MCF 10A (cell line): ENCODE measurements at regions of chr1 and their contacts with region 1.

Region 1: GRCh38 chr1:32400876-32401631 is 6.8 kb upstream of the BSDC1 start:
- DNase-seq: peak; percentile 90
- H3K4me3 Mint-ChIP-seq: no peak overlapping the region
- H3K27ac Mint-ChIP-seq: peak overlapping the region; percentile 67
- H3K4me1 Mint-ChIP-seq: peaks cover 6% of the 10 kb centered on the region
- H3K27me3 Mint-ChIP-seq: no peaks in the 10 kb centered on the region
- CTCF ChIP-seq: peak; percentile 86

Region 2: DNA sequence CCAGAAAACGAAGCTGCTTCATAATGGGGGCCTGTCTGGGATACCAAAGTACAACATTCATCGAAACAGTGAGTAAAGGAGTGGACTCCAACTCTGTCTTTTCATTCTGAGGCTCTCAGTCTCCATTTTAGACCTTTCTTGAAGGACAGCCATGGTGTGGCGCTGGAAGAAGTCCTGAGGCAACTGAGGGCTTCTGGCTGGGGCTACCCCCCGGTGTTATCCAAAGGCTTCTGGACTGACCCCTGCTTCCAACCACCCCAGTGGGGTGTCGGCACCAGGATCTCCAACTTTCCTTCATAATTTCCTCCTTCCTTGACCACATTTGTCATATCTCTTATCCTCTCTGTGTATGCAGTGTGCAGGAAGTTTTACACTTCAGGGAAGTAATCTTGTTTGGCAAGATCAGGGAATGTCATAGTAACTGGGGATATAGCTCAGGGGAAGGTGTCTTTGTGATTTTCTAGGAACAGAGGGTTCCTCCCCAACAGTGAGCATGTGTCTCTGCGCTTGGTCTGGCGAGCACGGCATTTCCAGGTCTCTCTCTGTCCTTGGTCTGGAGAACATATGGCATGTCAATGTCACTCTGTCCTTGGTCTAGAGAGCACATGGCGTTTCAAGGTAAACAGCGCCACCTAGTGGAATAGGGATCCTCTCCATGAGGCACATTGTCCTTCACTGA is 12.6 kb after region 1 on chr1:
- CTCF ChIA-PET with region 1: interaction called, 20 read pairs
- POLR2A ChIA-PET with region 1: no interaction called
- intact Hi-C with region 1: loop called (anchors 2 kb)
- DNase-seq: peak; percentile 84
- H3K4me3 Mint-ChIP-seq: no peak overlapping the region
- H3K27ac Mint-ChIP-seq: no peak overlapping the region
- H3K4me1 Mint-ChIP-seq: no peaks in the 10 kb centered on the region
- H3K27me3 Mint-ChIP-seq: no peaks in the 10 kb centered on the region
- CTCF ChIP-seq: peak; percentile 60

Region 3: DNA sequence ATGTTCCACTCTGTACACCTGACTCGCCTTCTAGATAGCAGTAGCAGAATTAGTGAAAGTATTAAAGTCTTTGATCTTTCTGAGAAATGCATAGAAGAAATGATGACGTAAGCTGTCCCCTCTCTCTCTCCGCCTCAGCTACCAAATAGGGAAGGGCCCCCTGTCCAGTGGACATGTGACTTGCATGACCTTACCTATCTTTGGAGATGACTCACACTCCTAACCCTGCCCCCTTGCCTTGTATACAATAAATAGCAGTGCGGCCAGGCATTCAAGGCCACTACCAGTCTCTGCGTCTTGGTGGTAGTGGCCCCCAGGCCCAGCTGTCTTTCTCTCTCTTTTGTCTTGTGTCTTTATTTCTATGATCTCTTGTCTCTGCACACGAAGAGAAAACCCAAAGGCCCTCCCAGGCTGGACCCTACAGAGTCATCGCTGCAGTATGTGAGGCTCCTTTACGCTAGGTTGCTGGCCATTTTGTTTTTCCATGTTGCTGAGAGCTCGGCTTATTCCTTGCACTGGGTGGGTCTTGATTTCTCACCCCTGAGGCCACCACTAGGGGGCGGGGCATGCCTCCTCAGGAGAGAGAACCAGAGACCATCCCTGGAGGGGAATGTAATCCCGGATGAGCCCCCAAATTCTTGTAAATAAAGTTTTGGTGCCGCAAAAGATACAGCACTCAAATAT is 47.9 kb after region 1 on chr1:
- CTCF ChIA-PET with region 1: interaction called, 12 read pairs
- POLR2A ChIA-PET with region 1: no interaction called
- intact Hi-C with region 1: loop called (anchors 1 kb)
- DNase-seq: peak; percentile 69
- H3K4me3 Mint-ChIP-seq: no peak overlapping the region
- H3K27ac Mint-ChIP-seq: no peak overlapping the region
- H3K4me1 Mint-ChIP-seq: peaks cover 9% of the 10 kb centered on the region
- H3K27me3 Mint-ChIP-seq: peaks cover 13% of the 10 kb centered on the region
- CTCF ChIP-seq: peak; percentile 28

Region 4: DNA sequence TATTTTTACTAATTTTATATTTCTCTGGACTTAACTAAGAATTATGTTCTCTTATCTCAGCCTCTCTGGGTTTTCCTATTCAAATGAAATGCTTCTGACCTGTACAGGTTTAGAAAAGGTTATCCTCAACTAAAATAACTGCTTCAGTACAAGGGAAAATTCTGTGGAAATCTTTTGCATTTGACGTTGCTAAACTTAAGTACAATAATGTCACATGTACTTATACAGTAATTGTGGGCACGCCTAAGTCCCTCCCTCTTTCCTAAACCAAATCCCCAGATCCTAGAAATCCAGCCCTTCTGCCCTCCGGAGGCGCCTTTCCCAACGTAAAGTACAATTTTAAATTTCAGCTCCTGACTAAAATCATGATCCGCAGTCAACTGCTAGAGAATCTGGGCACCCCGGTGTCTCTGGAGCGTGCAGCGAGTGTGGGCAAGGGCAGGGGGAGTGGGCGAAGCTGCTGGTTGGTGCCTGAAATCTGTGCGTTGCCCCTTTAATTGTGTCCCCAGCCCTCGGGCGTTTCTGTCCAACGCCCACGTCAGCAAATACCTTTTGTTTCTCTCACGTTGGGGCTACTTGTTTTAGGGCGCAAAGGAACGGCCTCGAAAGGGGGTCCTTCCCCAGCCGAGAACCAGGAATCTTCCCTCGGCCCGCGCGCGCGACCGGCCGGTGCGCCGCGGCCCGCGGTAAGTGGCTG is 138.0 kb after region 1 on chr1 and contains the start of gene ZBTB8A:
- CTCF ChIA-PET with region 1: no interaction called
- POLR2A ChIA-PET with region 1: interaction called, 3 read pairs
- intact Hi-C with region 1: loop called (anchors 10 kb)
- DNase-seq: peak; percentile 71
- H3K4me3 Mint-ChIP-seq: peak within 1 kb of the TSS; percentile 82
- H3K27ac Mint-ChIP-seq: peak within 1 kb of the TSS; percentile 87
- H3K4me1 Mint-ChIP-seq: peaks cover 18% of the 10 kb centered on the region
- H3K27me3 Mint-ChIP-seq: no peaks in the 10 kb centered on the region
- CTCF ChIP-seq: no peak
- total RNA-seq, gene ZBTB8A: 11.5 and 15.1 TPM in 2 replicates

Region 5: DNA sequence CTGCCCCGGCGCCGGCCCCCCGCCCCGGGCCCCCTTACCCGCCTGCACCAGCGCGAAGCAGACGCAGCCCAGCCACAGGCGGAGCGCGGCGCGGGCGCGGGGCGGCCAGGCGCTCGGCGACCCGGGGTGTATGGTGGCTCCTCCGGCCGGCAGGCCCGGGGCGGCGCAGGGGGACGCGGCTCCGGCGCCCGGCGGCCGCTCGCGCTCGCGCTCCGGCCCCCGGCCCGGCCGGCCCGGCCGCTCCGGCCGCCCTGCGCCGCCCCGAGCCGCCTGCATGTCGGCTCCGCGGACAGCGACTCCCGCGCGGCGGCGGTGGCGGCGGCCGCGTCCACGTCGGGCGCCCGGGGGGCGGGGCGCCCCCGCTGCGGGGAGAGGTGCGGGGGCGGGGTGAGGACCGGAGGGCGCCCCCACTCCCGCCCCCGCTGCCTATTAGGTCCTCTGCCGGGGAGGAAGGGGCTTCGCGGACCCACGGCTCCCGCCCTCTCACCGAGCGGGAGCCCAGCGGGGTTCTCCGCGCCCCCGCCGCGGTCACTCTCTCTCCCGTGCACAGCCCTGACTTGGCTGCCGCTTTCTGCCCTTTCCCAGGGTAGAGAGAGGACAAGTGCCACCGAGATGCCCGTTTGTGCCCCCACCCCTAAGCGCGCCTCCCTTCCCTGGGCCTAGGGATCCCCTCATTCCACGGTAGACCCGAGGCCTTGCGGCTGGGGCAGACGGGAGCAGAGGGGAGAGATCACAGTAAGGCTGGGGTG is 469.7 kb after region 1 on chr1 and contains the start of gene FNDC5:
- CTCF ChIA-PET with region 1: interaction called, 7 read pairs
- POLR2A ChIA-PET with region 1: no interaction called
- intact Hi-C with region 1: loop called (anchors 2 kb)
- DNase-seq: no peak
- H3K4me3 Mint-ChIP-seq: peak within 1 kb of the TSS; percentile 61
- H3K27ac Mint-ChIP-seq: no peak within 1 kb of the TSS
- H3K4me1 Mint-ChIP-seq: peaks cover 5% of the 10 kb centered on the region
- H3K27me3 Mint-ChIP-seq: peaks cover 12% of the 10 kb centered on the region
- CTCF ChIP-seq: no peak
- total RNA-seq, gene FNDC5: not detected in 2 replicates

Region 6: DNA sequence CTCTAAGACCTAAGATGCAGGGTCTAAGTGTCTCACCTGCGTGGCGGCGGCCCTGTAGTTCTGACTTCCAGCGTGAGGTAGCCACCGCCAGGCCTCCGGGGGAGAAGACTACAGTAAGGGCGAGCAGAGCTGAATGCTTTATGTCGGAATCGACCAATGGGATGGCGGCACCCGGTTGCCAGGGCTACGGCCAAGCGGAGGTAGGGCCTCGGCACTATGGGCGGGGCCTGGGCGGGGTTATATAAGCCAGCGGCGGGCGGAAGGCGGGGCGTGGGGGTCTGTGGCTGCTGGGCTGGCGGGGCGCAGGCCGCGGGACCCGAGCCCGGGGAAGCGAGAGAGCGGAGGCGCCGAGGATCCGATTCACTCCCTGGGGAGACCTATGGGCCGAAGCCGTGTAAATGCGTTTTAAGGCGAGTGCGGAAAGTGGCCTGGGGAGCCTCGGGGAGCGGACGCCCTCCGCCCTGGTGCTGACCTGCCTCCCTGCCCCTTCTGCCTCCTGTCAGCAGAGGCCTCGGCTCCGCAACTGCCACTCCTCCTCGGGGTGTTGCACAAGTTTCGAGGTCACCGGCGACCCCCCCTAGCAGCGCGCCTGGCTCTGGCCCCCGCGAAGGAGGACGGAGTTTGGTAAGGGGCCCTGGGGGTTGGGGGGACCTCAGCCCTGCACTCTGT is 680.0 kb after region 1 on chr1 and contains the start of gene AZIN2:
- CTCF ChIA-PET with region 1: interaction called, 3 read pairs
- POLR2A ChIA-PET with region 1: no interaction called
- intact Hi-C with region 1: loop called (anchors 10 kb)
- DNase-seq: peak; percentile 94
- H3K4me3 Mint-ChIP-seq: peak within 1 kb of the TSS; percentile 75
- H3K27ac Mint-ChIP-seq: peak within 1 kb of the TSS; percentile 59
- H3K4me1 Mint-ChIP-seq: peaks cover 20% of the 10 kb centered on the region
- H3K27me3 Mint-ChIP-seq: no peaks in the 10 kb centered on the region
- CTCF ChIP-seq: no peak
- total RNA-seq, gene AZIN2: 1.6 and 4.3 TPM in 2 replicates